ENCODE measurements at regions of chr10 and their contacts with region 1.

Region 1: DNA sequence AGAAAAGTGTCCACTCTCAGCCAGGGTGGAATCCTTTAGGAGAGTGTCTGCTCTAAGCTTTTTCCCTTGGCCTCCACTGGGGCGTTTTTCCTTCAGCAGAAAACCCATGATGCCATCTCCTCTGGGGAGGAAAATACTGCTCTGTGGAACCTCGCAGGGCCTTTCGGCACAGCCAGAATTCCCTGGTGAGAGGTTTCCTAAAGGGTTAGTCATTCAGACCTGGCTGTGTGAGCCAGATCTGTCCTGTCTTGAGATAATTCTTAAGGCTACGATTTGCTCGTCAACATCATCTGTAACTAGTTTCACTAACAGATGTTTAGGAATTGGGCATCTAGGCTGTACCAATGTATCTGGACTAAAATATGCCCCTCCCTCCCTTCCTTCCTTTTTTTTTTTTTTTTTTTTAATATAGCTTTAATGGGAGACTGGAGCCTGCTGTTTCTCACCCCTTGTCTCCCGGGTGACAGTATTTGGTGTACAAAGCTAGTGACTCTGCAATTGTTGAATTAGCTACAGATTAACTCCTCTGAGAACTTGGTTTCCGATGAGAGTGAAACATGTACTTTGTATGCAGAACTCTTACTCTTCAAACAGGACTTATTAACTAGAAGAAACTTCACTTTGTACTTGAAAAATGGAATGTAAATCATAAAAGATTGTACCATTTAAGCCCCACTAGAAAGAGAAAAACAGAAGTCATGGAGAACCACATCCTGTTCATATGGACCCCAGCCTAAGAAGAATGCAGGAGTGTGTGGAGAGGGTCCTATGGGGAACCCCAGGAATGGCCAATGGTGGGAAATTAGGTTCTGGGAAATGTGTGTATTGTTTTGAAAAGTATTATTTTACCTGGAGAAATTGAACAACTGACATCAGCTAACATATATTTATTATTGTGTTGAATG is 230.9 kb downstream of the CAMK1D start:
- DNase-seq: no peak
- ATAC-seq: peak; percentile 72
- H3K4me3 ChIP-seq: no peak overlapping the region
- H3K27ac ChIP-seq: 0 out of 2 replicates have a peak overlapping the region, but pooled peaks have one; percentile 9
- H3K4me1 ChIP-seq: no peaks in the 10 kb centered on the region
- H3K27me3 ChIP-seq: no peaks in the 10 kb centered on the region
- CTCF ChIP-seq: no peak
- EP300 ChIP-seq: no peak
- POLR2A ChIP-seq: no peak
- RAD21 ChIP-seq: no peak

Region 2: DNA sequence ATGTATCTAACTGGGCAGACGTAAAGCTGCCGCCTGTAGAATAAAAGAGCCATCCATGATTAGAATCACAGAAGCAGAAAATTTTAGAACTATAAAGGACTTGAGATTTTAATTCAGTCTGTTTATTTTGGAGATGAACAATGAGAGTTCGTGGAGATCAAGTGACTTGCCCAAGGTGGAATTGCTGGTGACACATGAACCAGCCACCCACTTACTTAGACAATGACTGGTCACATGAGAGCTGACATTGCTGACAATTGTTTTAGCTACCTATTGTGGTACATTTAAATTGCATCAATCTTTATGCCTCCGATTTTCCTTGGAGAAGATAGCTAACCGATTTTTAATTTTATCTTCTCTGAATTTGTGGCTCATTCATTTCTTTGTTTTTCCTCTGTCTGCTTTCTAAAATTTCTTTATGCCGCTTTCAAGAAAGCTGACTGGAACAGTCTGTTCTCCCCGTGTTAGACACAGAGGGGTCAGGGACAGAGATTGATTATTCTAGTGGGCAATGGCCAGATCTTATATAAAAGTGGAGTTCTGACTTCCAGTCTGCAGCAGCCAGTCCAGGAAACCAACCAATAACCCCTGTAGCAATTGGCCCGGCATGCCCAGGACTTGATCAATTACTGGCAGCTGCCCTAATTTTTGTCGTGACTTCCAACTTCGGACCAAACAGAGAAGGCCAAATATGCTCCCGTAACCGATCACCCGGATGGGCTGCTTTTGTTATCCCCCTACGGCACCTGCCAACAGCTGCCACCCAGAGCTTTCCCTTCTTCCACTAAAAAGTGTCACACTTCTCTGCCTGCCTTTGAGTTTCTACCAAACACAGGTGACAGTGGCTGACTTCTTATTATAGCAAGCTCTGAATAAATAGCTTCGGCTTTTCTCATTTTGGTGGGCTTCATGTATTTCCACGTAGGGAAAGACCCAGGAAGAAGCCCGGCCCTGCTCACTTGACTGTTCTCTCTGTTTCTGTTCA is 10.8 kb after region 1 on chr10:
- CTCF ChIA-PET with region 1: no interaction called
- POLR2A ChIA-PET with region 1: interaction called, 5 read pairs
- RAD21 ChIA-PET with region 1: interaction called, 3 read pairs
- SMC1A ChIA-PET with region 1: interaction called, 12 read pairs
- in situ Hi-C with region 1: no loop called
- intact Hi-C with region 1: no loop called
- DNase-seq: no peak
- ATAC-seq: no peak
- H3K4me3 ChIP-seq: no peak overlapping the region
- H3K27ac ChIP-seq: no peak overlapping the region
- H3K4me1 ChIP-seq: peaks cover 12% of the 10 kb centered on the region
- H3K27me3 ChIP-seq: no peaks in the 10 kb centered on the region
- CTCF ChIP-seq: no peak
- EP300 ChIP-seq: no peak
- POLR2A ChIP-seq: no peak
- RAD21 ChIP-seq: no peak

Region 3: DNA sequence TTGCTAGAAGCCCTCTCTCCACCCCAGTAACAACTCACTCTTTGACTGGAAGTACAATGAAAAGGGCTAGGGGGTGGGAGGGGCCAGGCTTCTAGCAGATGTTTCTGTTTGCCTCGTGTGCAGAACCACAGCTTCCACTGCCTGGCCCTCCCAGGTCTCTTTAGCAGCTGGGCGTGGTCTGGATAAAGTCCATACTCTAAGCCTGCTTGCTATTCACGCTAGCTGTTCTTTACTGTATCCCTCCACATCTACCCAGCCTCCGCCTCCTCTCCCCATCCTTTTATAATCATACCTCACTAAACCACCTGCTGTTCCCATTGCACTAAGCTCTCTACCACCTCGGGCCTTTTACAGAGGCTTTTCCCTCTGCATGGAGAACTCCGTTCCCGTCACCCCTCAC is 57.9 kb after region 1 on chr10:
- CTCF ChIA-PET with region 1: no interaction called
- POLR2A ChIA-PET with region 1: no interaction called
- RAD21 ChIA-PET with region 1: no interaction called
- SMC1A ChIA-PET with region 1: no interaction called
- in situ Hi-C with region 1: no loop called
- intact Hi-C with region 1: no loop called
- DNase-seq: no peak
- ATAC-seq: peak; percentile 31; the same call in 2 of the 3 replicates
- H3K4me3 ChIP-seq: no peak overlapping the region
- H3K27ac ChIP-seq: no peak overlapping the region
- H3K4me1 ChIP-seq: peaks cover 4% of the 10 kb centered on the region
- H3K27me3 ChIP-seq: no peaks in the 10 kb centered on the region
- CTCF ChIP-seq: no peak
- EP300 ChIP-seq: no peak
- POLR2A ChIP-seq: no peak
- RAD21 ChIP-seq: no peak

Measured in GM12878 (cell line).